T-cell (primary cell): ENCODE measurements at regions of chr1 and their contacts with region 1.

Region 1: DNA sequence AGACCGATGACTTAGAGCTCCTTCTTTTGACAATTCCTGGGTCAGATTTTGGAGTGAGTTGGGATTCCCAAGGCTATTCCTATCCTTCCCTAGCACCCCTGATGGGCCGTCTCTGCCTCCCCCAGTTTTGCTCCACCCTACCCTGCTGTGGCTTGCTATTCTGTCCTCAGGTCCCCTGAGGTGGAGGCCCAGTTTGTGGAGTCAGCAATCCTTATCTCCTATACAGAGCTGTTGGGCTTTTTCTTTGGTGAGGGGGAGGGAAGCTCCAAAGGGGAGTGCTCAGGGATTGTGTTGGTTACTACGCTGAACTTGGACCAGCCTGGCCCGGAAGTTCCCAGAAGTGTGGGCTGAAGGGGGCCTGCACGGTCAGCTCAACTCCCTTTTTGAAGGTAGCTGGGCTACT is 7.6 kb downstream of the SESN2 start:
- DNase-seq: no peak
- ATAC-seq: no peak
- H3K4me3 ChIP-seq: no peak overlapping the region
- H3K4me3 Mint-ChIP-seq: no peak overlapping the region
- H3K27ac ChIP-seq: no peak overlapping the region
- H3K27ac Mint-ChIP-seq: no peak overlapping the region
- H3K4me1 ChIP-seq: peaks cover 0 to 3% of the 10 kb centered on the region in 2 experiments
- H3K4me1 Mint-ChIP-seq: peaks cover 4 to 15% (median 7%) of the 10 kb centered on the region in 3 donors
- H3K27me3 ChIP-seq: no peaks in the 10 kb centered on the region
- H3K27me3 Mint-ChIP-seq: no peaks in the 10 kb centered on the region

Region 2: GRCh38 chr1:27884006-27884954 is 382.6 kb before region 1 on chr1:
- CTCF ChIA-PET with region 1: no interaction called
- POLR2A ChIA-PET with region 1: no interaction called
- DNase-seq: no peak
- ATAC-seq: no peak
- H3K4me3 ChIP-seq: no peak overlapping the region
- H3K4me3 Mint-ChIP-seq: peak overlapping the region in 1 of 3 donors; percentile 20
- H3K27ac ChIP-seq: peak overlapping the region; percentile 75
- H3K27ac Mint-ChIP-seq: peak overlapping the region in 1 of 2 donors; percentile 99
- H3K4me1 ChIP-seq: peaks cover 16 to 71% of the 10 kb centered on the region in 2 experiments
- H3K4me1 Mint-ChIP-seq: peaks cover 21 to 74% (median 68%) of the 10 kb centered on the region in 3 donors
- H3K27me3 ChIP-seq: no peaks in the 10 kb centered on the region
- H3K27me3 Mint-ChIP-seq: no peaks in the 10 kb centered on the region

Region 3: GRCh38 chr1:28313710-28314546 is 47.0 kb after region 1 on chr1:
- CTCF ChIA-PET with region 1: interaction called in 1 of 2 experiments, 3 read pairs
- POLR2A ChIA-PET with region 1: interaction called in 1 of 2 experiments, 11 read pairs
- DNase-seq: peak in 3 of 35 experiments; percentile 6 to 26 (median 6)
- ATAC-seq: no peak
- H3K4me3 ChIP-seq: no peak overlapping the region
- H3K4me3 Mint-ChIP-seq: no peak overlapping the region
- H3K27ac ChIP-seq: no peak overlapping the region
- H3K27ac Mint-ChIP-seq: no peak overlapping the region
- H3K4me1 ChIP-seq: no peaks in the 10 kb centered on the region
- H3K4me1 Mint-ChIP-seq: no peaks in the 10 kb centered on the region
- H3K27me3 ChIP-seq: peaks cover 0 to 2% of the 10 kb centered on the region in 2 experiments
- H3K27me3 Mint-ChIP-seq: peaks cover 0 to 1% of the 10 kb centered on the region in 2 donors

Region 4: DNA sequence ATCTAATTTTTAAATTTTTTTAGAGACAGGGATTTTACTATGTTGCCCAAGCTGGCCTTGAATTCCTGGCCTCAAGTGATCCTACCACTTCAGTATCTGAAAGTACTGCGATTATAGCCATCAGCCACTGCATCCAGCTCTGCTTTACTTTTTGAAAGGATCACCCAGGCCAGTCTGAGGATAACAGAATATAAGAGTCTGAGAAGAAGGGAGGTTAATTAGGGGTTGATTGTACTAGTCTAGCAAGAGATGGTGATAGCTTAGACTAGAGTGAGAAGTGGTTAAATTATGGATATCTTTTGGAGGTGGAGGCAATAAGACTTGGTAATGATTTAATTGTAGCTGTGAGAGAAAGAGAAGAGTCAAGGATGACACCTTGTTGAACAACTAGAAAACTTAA is 134.8 kb after region 1 on chr1:
- CTCF ChIA-PET with region 1: no interaction called
- POLR2A ChIA-PET with region 1: interaction called in 1 of 2 experiments, 11 read pairs
- DNase-seq: no peak
- ATAC-seq: no peak
- H3K4me3 ChIP-seq: no peak overlapping the region
- H3K4me3 Mint-ChIP-seq: no peak overlapping the region
- H3K27ac ChIP-seq: no peak overlapping the region
- H3K27ac Mint-ChIP-seq: no peak overlapping the region
- H3K4me1 ChIP-seq: no peaks in the 10 kb centered on the region
- H3K4me1 Mint-ChIP-seq: peaks cover 6 to 20% (median 19%) of the 10 kb centered on the region in 3 donors
- H3K27me3 ChIP-seq: no peaks in the 10 kb centered on the region
- H3K27me3 Mint-ChIP-seq: no peaks in the 10 kb centered on the region